HepG2 (cell line): ENCODE measurements at regions of chr14 and their contacts with region 1.

Region 1: DNA sequence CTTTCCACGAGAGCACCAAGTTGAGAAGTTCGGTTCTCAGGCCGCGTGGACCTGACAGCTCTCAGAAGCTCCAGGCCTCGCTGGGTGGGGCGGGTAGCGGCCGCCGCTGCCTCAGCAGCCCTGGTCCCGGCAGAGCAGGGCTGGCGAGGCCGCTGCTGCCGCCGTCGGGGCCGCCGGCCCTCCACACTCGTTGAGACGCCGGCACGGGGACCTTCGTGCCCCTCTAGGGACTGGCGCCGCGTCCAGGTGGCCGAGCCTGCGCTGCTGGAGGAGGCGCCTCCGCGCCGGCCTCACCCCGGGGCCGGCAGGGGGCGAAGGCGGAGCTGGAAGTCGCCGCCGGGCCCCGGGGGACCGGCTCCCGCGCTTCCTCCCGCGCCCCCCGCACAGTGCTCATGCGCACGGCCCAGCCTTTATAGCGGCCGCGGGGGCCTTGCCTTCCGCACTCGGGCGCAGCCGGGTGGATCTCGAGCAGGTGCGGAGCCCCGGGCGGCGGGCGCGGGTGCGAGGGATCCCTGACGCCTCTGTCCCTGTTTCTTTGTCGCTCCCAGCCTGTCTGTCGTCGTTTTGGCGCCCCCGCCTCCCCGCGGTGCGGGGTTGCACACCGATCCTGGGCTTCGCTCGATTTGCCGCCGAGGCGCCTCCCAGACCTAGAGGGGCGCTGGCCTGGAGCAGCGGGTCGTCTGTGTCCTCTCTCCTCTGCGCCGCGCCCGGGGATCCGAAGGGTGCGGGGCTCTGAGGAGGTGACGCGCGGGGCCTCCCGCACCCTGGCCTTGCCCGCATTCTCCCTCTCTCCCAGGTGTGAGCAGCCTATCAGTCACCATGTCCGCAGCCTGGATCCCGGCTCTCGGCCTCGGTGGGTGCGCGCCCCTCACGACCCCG is at the start of gene COCH:
- DNase-seq: peak; percentile 71
- ATAC-seq: peak; percentile 92
- H3K4me3 ChIP-seq: peak within 1 kb of the TSS; percentile 71 to 89 (median 79)
- H3K27ac ChIP-seq: no peak within 1 kb of the TSS
- H3K4me1 ChIP-seq: peaks cover 29% of the 10 kb centered on the region
- H3K27me3 ChIP-seq: peaks cover 0 to 32% of the 10 kb centered on the region in 2 experiments; a peak in 4 of 5 replicates
- CTCF ChIP-seq: peak; percentile 72
- EP300 ChIP-seq: peak in 1 of 2 experiments; percentile 31; a peak in 1 of 4 replicates
- POLR2A ChIP-seq: peak in 1 of 2 experiments; percentile 86; a peak in 2 of 4 replicates
- RAD21 ChIP-seq: peak; percentile 95
- total RNA-seq, gene COCH: 46.1 and 79.3 TPM in 2 replicates

Region 2: GRCh38 chr14:30822080-30822571 is 52.2 kb before region 1 on chr14:
- CTCF ChIA-PET with region 1: no interaction called
- POLR2A ChIA-PET with region 1: no interaction called
- in situ Hi-C with region 1: no loop called
- intact Hi-C with region 1: no loop called
- DNase-seq: no peak
- ATAC-seq: peak; percentile 67
- H3K4me3 ChIP-seq: no peak overlapping the region
- H3K27ac ChIP-seq: no peak overlapping the region
- H3K4me1 ChIP-seq: no peaks in the 10 kb centered on the region
- H3K27me3 ChIP-seq: peaks cover 0 to 7% of the 10 kb centered on the region in 2 experiments; a peak in 1 of 5 replicates
- CTCF ChIP-seq: no peak
- EP300 ChIP-seq: no peak
- POLR2A ChIP-seq: no peak
- RAD21 ChIP-seq: no peak

Region 3: GRCh38 chr14:30906752-30907658 is 32.6 kb after region 1 on chr14:
- CTCF ChIA-PET with region 1: interaction called, 12 read pairs
- POLR2A ChIA-PET with region 1: interaction called, 8 read pairs
- in situ Hi-C with region 1: no loop called
- intact Hi-C with region 1: loop called (anchors 1 kb)
- DNase-seq: peak; percentile 58
- ATAC-seq: peak; percentile 37
- H3K4me3 ChIP-seq: no peak overlapping the region
- H3K27ac ChIP-seq: no peak overlapping the region
- H3K4me1 ChIP-seq: peaks cover 13% of the 10 kb centered on the region
- H3K27me3 ChIP-seq: no peaks in the 10 kb centered on the region
- CTCF ChIP-seq: peak; percentile 62
- EP300 ChIP-seq: no peak
- POLR2A ChIP-seq: no peak
- RAD21 ChIP-seq: peak; percentile 30; the same call in 1 of the 2 replicates